HepG2 (cell line): ENCODE measurements at regions of chr1 and their contacts with region 1.

Region 1: DNA sequence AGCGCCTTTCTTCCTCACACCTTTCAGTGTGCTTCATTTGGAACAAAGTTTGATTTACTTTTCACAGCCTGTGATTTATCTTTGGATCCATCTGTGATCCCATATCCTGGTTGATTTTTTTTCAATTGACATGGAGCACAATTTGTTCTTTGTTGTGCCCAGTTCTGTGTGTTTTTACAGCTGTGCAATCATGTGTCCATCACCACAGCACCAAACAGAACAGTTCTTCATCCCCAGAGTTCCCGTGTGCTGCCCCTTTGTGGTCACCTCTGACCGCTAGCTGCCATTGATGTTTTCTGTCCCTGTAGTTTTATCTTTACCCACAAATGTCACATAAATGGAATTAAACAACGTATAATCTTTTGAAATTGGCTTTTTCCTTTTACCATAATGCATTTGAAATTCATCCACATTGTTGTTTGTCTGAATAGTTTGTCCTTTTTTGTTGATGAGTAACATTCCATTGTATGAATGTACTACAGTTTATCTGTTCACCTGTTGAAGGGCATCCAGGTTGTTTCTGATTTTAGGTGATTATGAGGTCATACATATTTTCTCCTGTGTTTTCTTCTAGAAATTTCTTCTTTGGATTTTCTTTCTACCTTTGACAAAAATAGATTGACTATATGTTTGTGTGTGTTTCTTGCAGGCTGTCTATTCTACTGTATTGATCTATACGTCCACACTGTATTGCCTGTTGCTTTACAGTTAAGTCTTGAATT is 17.4 kb downstream of the MIGA1 start:
- DNase-seq: peak; percentile 40
- ATAC-seq: peak; percentile 91
- H3K4me3 ChIP-seq: no peak overlapping the region
- H3K27ac ChIP-seq: no peak overlapping the region
- H3K4me1 ChIP-seq: peaks cover 19% of the 10 kb centered on the region
- H3K27me3 ChIP-seq: no peaks in the 10 kb centered on the region
- CTCF ChIP-seq: peak; percentile 64
- EP300 ChIP-seq: no peak
- POLR2A ChIP-seq: no peak
- RAD21 ChIP-seq: no peak

Region 2: DNA sequence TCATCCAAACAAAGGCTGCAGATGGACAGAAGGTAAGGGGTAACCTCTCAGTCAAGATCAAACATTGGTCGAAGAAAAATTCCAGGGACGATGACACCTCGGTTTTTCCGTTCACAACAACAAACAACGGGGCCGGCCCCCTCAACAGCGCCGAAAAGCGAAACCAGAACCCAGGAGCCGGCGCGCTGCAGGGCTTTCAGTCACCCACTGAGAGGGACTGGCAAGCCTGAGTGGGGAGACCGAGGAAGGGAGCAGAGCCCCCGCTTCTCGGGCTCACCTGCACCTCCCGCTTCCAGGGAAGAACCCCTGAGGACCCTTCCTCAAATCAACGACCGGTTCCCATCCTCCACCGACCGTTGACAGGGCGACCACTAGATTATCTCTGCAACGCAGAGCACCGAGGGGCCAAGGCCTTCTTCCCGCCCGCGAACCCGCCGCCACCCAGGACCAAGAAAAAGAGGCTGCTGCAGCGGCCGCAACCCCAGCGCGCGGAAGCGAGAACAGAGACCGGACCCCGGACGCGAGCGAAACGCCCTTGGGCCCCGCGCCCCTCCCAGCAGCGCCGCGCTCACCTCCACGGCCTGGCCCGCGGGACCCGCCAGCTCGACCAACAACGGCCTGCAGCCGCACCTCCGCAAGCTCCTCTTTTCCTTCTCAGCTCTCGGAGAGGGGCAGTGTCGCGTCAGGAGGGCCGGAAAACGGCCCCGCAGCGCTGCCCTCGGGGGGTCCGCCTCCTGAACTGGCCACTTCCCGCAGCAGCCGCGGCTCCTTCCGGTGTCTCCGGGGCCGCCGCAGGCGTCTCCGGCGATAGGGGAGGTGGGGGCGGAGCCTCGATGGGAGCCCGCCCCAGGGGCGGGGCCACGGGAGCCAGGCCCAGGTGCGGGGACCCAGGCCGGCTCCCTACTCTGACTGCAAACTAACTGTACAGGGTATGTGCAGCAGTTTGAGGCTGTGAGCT is 37.5 kb before region 1 on chr1 and contains the start of gene USP33:
- CTCF ChIA-PET with region 1: no interaction called
- POLR2A ChIA-PET with region 1: no interaction called
- in situ Hi-C with region 1: no loop called
- intact Hi-C with region 1: loop called (anchors 2 kb)
- DNase-seq: peak; percentile 72
- ATAC-seq: peak; percentile 96
- H3K4me3 ChIP-seq: peak within 1 kb of the TSS; percentile 92 to 95 (median 94)
- H3K27ac ChIP-seq: peak within 1 kb of the TSS; percentile 91
- H3K4me1 ChIP-seq: peaks cover 29% of the 10 kb centered on the region
- H3K27me3 ChIP-seq: no peaks in the 10 kb centered on the region; a peak in 1 of 5 replicates
- CTCF ChIP-seq: 0 out of 2 replicates have a peak, but pooled peaks have one; percentile 10
- EP300 ChIP-seq: no peak
- POLR2A ChIP-seq: peak; percentile 75 to 85
- RAD21 ChIP-seq: no peak
- total RNA-seq, gene USP33: 48.2 and 49.1 TPM in 2 replicates

Region 3: DNA sequence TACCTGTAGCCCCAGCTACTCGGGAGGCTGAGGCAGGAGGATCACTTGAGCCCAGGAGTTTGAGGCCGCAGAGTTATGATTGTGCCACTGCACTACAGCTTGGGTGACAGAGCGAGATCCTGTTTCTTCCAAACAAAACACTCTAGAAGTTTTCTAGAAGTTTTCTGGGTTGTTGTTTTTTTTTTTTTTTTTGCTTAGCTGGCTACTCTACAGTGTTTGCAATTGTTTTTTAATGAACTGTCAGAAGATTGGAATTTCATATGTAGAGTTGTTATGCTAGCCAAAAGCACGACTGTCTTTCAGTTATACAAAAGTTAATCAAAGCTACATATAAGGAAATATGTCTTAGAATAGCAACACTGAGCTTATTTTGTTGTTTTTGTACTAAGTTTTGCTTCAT is 60.7 kb after region 1 on chr1:
- CTCF ChIA-PET with region 1: no interaction called
- POLR2A ChIA-PET with region 1: no interaction called
- in situ Hi-C with region 1: no loop called
- intact Hi-C with region 1: no loop called
- DNase-seq: no peak
- ATAC-seq: no peak
- H3K4me3 ChIP-seq: no peak overlapping the region
- H3K27ac ChIP-seq: no peak overlapping the region
- H3K4me1 ChIP-seq: no peaks in the 10 kb centered on the region
- H3K27me3 ChIP-seq: no peaks in the 10 kb centered on the region
- CTCF ChIP-seq: no peak
- EP300 ChIP-seq: no peak
- POLR2A ChIP-seq: no peak
- RAD21 ChIP-seq: no peak